CD4-positive, alpha-beta memory T cell (primary cell): ENCODE measurements at regions of chr14 and their contacts with region 1.

Region 1: DNA sequence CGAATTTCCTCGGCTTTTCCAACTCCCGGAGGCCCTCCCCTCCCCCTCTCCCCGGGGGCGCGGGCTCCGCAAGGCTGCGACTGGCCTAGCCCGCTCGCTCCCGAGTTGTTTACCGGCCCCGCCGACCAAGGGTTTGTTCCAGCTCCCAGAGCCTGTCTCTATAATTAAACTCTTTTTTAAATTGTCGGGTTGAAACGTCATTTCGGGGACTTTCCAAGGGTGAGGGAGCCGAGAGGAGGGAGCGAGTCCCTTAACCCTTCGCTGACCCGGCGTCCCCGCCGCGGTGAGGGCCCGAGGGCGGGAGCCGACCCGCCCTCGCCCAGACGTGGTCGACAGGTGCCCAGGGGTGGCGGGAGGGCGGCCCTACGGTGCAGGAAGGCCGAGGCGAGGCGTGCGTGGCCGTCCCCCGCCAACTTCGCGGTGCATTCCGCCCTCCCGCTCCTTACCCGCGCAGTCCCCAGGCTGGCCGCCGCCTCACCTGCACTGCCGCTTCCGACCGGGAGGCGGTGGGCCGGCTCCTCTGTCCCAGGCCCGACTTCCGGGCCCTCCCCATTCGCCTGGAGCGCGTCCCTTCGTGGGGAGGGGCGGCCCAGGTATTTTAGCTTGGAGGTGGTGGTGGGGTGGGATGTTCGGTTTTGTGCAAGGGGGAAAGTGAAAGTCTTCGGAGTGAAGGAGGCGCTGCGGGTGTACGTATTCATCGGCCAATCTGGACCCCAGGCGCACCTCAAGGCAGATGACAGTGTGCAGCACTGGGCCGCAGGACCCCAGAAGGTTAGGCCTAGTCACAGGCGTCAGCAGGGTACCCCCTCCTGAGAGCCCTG is 2.9 kb upstream of the ZFP36L1 start:
- DNase-seq: peak; percentile 88 to 93 (median 89)
- H3K4me3 ChIP-seq: peak overlapping the region; percentile 88 to 98
- H3K4me3 Mint-ChIP-seq: peak overlapping the region; percentile 88 to 100 (median 94)
- H3K27ac ChIP-seq: peak overlapping the region; percentile 99
- H3K27ac Mint-ChIP-seq: peak overlapping the region; percentile 98 to 100 (median 99)
- H3K4me1 ChIP-seq: peaks cover 20% of the 10 kb centered on the region
- H3K4me1 Mint-ChIP-seq: peaks cover 22 to 71% (median 29%) of the 10 kb centered on the region in 4 donors
- H3K27me3 ChIP-seq: no peaks in the 10 kb centered on the region
- H3K27me3 Mint-ChIP-seq: peaks cover 0 to 8% of the 10 kb centered on the region in 2 donors

Region 2: GRCh38 chr14:67816326-67817002 is 979.3 kb before region 1 on chr14 and contains the start of gene ZFYVE26:
- CTCF ChIA-PET with region 1: no interaction called
- POLR2A ChIA-PET with region 1: interaction called, 5 read pairs
- intact Hi-C with region 1: loop called (anchors 2 kb)
- DNase-seq: peak; percentile 87 to 95 (median 88)
- H3K4me3 ChIP-seq: peak within 1 kb of the TSS; percentile 54 to 86
- H3K4me3 Mint-ChIP-seq: peak within 1 kb of the TSS; percentile 89 to 99 (median 96)
- H3K27ac ChIP-seq: peak within 1 kb of the TSS; percentile 47
- H3K27ac Mint-ChIP-seq: peak within 1 kb of the TSS; percentile 86 to 98 (median 96)
- H3K4me1 ChIP-seq: peaks cover 38% of the 10 kb centered on the region
- H3K4me1 Mint-ChIP-seq: peaks cover 39 to 61% (median 46%) of the 10 kb centered on the region in 4 donors
- H3K27me3 ChIP-seq: no peaks in the 10 kb centered on the region
- H3K27me3 Mint-ChIP-seq: no peaks in the 10 kb centered on the region
- total RNA-seq, gene ZFYVE26: 35.2 to 38.1 TPM

Region 3: DNA sequence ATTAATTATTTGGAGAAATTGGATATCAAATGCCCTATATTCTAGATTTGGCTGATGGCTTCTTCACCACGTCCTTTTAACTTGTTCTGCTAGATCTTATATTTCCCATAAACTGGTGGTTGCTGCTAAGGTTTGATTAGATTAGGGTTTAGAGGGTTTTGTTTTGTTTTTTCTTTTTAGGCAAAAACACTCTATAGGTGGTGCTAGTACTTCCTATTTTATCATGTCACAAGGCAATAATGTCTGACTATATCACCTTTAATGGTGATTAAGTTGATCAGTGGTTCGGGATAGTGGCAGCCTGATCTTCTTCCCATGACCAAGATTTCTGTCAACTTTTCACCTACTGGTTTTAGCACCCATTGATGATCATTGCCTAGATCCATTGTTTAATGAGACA is 521.1 kb before region 1 on chr14:
- CTCF ChIA-PET with region 1: interaction called, 3 read pairs
- POLR2A ChIA-PET with region 1: interaction called, 207 read pairs
- intact Hi-C with region 1: no loop called
- DNase-seq: no peak
- H3K4me3 ChIP-seq: no peak overlapping the region
- H3K4me3 Mint-ChIP-seq: peak overlapping the region in 3 of 8 donors; percentile 6 to 15 (median 9)
- H3K27ac ChIP-seq: no peak overlapping the region
- H3K27ac Mint-ChIP-seq: peak overlapping the region in 5 of 7 donors; percentile 24 to 77 (median 44)
- H3K4me1 ChIP-seq: peaks cover 30% of the 10 kb centered on the region
- H3K4me1 Mint-ChIP-seq: peaks cover 22 to 53% (median 30%) of the 10 kb centered on the region in 4 donors
- H3K27me3 ChIP-seq: no peaks in the 10 kb centered on the region
- H3K27me3 Mint-ChIP-seq: no peaks in the 10 kb centered on the region

Region 4: DNA sequence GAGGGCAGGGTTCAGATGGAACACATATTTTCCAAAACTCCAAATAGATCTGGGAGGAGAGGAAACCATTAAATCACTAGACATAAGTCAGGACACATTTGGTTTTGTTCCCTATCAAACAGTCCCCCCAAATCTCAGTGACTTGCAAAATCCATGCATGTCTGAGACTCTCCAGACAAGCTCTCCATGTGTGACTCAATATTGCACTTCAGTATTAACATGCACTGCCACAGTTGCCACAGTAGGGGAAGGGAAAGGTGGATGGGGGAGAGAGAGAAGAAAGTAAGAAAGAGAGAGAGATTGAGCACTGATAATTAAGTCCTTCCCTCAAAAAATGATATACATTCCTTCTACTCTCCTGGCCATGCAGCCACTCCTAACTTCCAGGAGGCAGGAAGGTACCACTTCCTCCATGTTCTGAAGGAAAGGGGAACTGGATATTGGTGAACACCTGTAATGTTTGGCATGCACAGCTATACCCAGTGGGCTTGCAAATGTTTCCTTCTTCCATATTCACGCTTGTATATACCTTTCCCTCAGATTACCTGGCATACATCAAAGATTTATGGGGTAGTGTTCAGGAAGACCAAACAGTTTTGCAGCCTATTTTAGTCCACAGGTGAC is 312.9 kb before region 1 on chr14:
- CTCF ChIA-PET with region 1: interaction called, 4 read pairs
- POLR2A ChIA-PET with region 1: interaction called, 10 read pairs
- intact Hi-C with region 1: no loop called
- DNase-seq: no peak
- H3K4me3 ChIP-seq: no peak overlapping the region
- H3K4me3 Mint-ChIP-seq: peak overlapping the region in 5 of 8 donors; percentile 16 to 72 (median 61)
- H3K27ac ChIP-seq: peak overlapping the region; percentile 18
- H3K27ac Mint-ChIP-seq: peak overlapping the region; percentile 77 to 95 (median 93)
- H3K4me1 ChIP-seq: peaks cover 43% of the 10 kb centered on the region
- H3K4me1 Mint-ChIP-seq: peaks cover 46 to 73% (median 58%) of the 10 kb centered on the region in 4 donors
- H3K27me3 ChIP-seq: no peaks in the 10 kb centered on the region
- H3K27me3 Mint-ChIP-seq: no peaks in the 10 kb centered on the region

Region 5: GRCh38 chr14:68598621-68599447 is 197.0 kb before region 1 on chr14:
- CTCF ChIA-PET with region 1: no interaction called
- POLR2A ChIA-PET with region 1: no interaction called
- intact Hi-C with region 1: no loop called
- DNase-seq: no peak
- H3K4me3 ChIP-seq: no peak overlapping the region
- H3K4me3 Mint-ChIP-seq: no peak overlapping the region
- H3K27ac ChIP-seq: no peak overlapping the region
- H3K27ac Mint-ChIP-seq: no peak overlapping the region
- H3K4me1 ChIP-seq: peaks cover 7% of the 10 kb centered on the region
- H3K4me1 Mint-ChIP-seq: peaks cover 4 to 7% (median 7%) of the 10 kb centered on the region in 4 donors
- H3K27me3 ChIP-seq: no peaks in the 10 kb centered on the region
- H3K27me3 Mint-ChIP-seq: no peaks in the 10 kb centered on the region

Region 6: GRCh38 chr14:68663385-68664076 is 132.3 kb before region 1 on chr14:
- CTCF ChIA-PET with region 1: no interaction called
- POLR2A ChIA-PET with region 1: interaction called, 63 read pairs
- intact Hi-C with region 1: no loop called
- DNase-seq: peak in 1 of 5 donors; percentile 13
- H3K4me3 ChIP-seq: peak overlapping the region; percentile 13 to 65
- H3K4me3 Mint-ChIP-seq: peak overlapping the region; percentile 83 to 97 (median 86)
- H3K27ac ChIP-seq: peak overlapping the region; percentile 3
- H3K27ac Mint-ChIP-seq: peak overlapping the region; percentile 14 to 93 (median 88)
- H3K4me1 ChIP-seq: peaks cover 33% of the 10 kb centered on the region
- H3K4me1 Mint-ChIP-seq: peaks cover 25 to 49% (median 32%) of the 10 kb centered on the region in 4 donors
- H3K27me3 ChIP-seq: no peaks in the 10 kb centered on the region
- H3K27me3 Mint-ChIP-seq: no peaks in the 10 kb centered on the region

Region 7: GRCh38 chr14:68734231-68734775 is 61.5 kb before region 1 on chr14:
- CTCF ChIA-PET with region 1: no interaction called
- POLR2A ChIA-PET with region 1: interaction called, 66 read pairs
- intact Hi-C with region 1: no loop called
- DNase-seq: peak; percentile 21 to 61 (median 30)
- H3K4me3 ChIP-seq: no peak overlapping the region
- H3K4me3 Mint-ChIP-seq: peak overlapping the region in 7 of 8 donors; percentile 15 to 52 (median 41)
- H3K27ac ChIP-seq: peak overlapping the region; percentile 32
- H3K27ac Mint-ChIP-seq: peak overlapping the region; percentile 9 to 93 (median 75)
- H3K4me1 ChIP-seq: peaks cover 29% of the 10 kb centered on the region
- H3K4me1 Mint-ChIP-seq: peaks cover 24 to 43% (median 34%) of the 10 kb centered on the region in 4 donors
- H3K27me3 ChIP-seq: no peaks in the 10 kb centered on the region
- H3K27me3 Mint-ChIP-seq: no peaks in the 10 kb centered on the region

Region 8: GRCh38 chr14:68862954-68863594 is 67.3 kb after region 1 on chr14:
- CTCF ChIA-PET with region 1: no interaction called
- POLR2A ChIA-PET with region 1: no interaction called
- intact Hi-C with region 1: no loop called
- DNase-seq: peak; percentile 43 to 59 (median 53)
- H3K4me3 ChIP-seq: no peak overlapping the region
- H3K4me3 Mint-ChIP-seq: no peak overlapping the region
- H3K27ac ChIP-seq: no peak overlapping the region
- H3K27ac Mint-ChIP-seq: peak overlapping the region in 1 of 7 donors; percentile 35
- H3K4me1 ChIP-seq: no peaks in the 10 kb centered on the region
- H3K4me1 Mint-ChIP-seq: no peaks in the 10 kb centered on the region
- H3K27me3 ChIP-seq: no peaks in the 10 kb centered on the region
- H3K27me3 Mint-ChIP-seq: no peaks in the 10 kb centered on the region

Region 9: GRCh38 chr14:69153131-69153872 is 357.5 kb after region 1 on chr14:
- CTCF ChIA-PET with region 1: no interaction called
- POLR2A ChIA-PET with region 1: interaction called, 3 read pairs
- intact Hi-C with region 1: loop called (anchors 2 kb)
- DNase-seq: peak; percentile 89 to 97 (median 94)
- H3K4me3 ChIP-seq: peak overlapping the region; percentile 32 to 94
- H3K4me3 Mint-ChIP-seq: peak overlapping the region; percentile 94 to 100 (median 97)
- H3K27ac ChIP-seq: peak overlapping the region; percentile 75
- H3K27ac Mint-ChIP-seq: peak overlapping the region; percentile 91 to 97 (median 93)
- H3K4me1 ChIP-seq: peaks cover 38% of the 10 kb centered on the region
- H3K4me1 Mint-ChIP-seq: peaks cover 22 to 45% (median 32%) of the 10 kb centered on the region in 4 donors
- H3K27me3 ChIP-seq: no peaks in the 10 kb centered on the region
- H3K27me3 Mint-ChIP-seq: peaks cover 0 to 2% of the 10 kb centered on the region in 2 donors

Region 10: GRCh38 chr14:69963966-69964365 is 1168.2 kb after region 1 on chr14:
- CTCF ChIA-PET with region 1: no interaction called
- POLR2A ChIA-PET with region 1: no interaction called
- intact Hi-C with region 1: no loop called
- DNase-seq: no peak
- H3K4me3 ChIP-seq: no peak overlapping the region
- H3K4me3 Mint-ChIP-seq: no peak overlapping the region
- H3K27ac ChIP-seq: no peak overlapping the region
- H3K27ac Mint-ChIP-seq: no peak overlapping the region
- H3K4me1 ChIP-seq: no peaks in the 10 kb centered on the region
- H3K4me1 Mint-ChIP-seq: no peaks in the 10 kb centered on the region
- H3K27me3 ChIP-seq: no peaks in the 10 kb centered on the region
- H3K27me3 Mint-ChIP-seq: peaks cover 2 to 6% of the 10 kb centered on the region in 2 donors